Common myeloid progenitor, CD34-positive (primary cell): ENCODE measurements at regions of chr7 and their contacts with region 1.

Region 1: GRCh38 chr7:128946923-128947830 is 9.4 kb downstream of the IRF5 start:
- DNase-seq: peak in 2 of 3 donors; percentile 33 to 34
- H3K4me3 ChIP-seq: no peak overlapping the region
- H3K27ac ChIP-seq: no peak overlapping the region
- H3K4me1 ChIP-seq: peaks cover 11 to 62% (median 32%) of the 10 kb centered on the region in 4 experiments
- H3K27me3 ChIP-seq: no peaks in the 10 kb centered on the region

Region 2: GRCh38 chr7:128904381-128905197 is 42.6 kb before region 1 on chr7:
- CTCF ChIA-PET with region 1: interaction called, 21 read pairs
- POLR2A ChIA-PET with region 1: no interaction called
- DNase-seq: peak; percentile 71 to 88 (median 83)
- H3K4me3 ChIP-seq: no peak overlapping the region
- H3K27ac ChIP-seq: no peak overlapping the region
- H3K4me1 ChIP-seq: peaks cover 0 to 2% (median under 1%) of the 10 kb centered on the region in 4 experiments
- H3K27me3 ChIP-seq: peaks cover 0 to 15% (median 10%) of the 10 kb centered on the region in 5 experiments

Region 3: DNA sequence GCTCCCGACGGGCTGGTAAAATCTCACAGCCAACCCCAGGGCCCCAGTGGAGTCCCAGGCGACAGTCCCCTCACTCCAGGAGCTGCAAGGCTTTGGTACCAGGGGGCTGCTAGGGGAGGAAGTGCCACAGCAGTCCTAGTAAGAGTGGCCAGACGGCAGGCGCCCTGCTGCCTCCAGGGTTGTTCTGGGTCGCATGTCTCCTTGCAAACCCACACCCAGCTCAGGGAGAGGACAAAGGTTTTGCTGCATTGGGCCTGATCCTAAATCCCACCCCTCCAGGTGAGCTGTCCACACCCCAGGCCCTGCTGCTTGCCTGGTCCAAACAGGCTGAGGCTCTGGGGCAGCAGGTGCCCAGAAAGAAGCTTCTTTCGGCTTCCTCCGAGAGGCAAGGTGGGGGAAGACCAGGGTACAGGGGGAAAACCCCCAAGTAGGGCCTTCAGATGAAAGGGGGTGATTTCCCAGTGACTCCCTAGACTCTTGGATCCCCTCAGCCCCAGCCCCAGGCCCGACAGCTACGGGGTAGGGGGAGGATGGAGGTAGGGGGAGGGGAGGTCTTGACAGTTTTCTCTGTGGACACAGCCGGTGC is 32.5 kb before region 1 on chr7:
- CTCF ChIA-PET with region 1: interaction called, 12 read pairs
- POLR2A ChIA-PET with region 1: no interaction called
- DNase-seq: peak in 2 of 3 donors; percentile 45 to 52
- H3K4me3 ChIP-seq: no peak overlapping the region
- H3K27ac ChIP-seq: no peak overlapping the region
- H3K4me1 ChIP-seq: peaks cover 0 to 21% (median 14%) of the 10 kb centered on the region in 4 experiments
- H3K27me3 ChIP-seq: peaks cover 0 to 57% (median 11%) of the 10 kb centered on the region in 5 experiments

Region 4: GRCh38 chr7:128933180-128933891 is 13.8 kb before region 1 on chr7:
- CTCF ChIA-PET with region 1: interaction called, 23 read pairs
- POLR2A ChIA-PET with region 1: no interaction called
- DNase-seq: peak; percentile 45 to 64 (median 62)
- H3K4me3 ChIP-seq: peak overlapping the region in 3 of 7 experiments; percentile 17 to 40 (median 39)
- H3K27ac ChIP-seq: no peak overlapping the region
- H3K4me1 ChIP-seq: peaks cover 0 to 52% (median 46%) of the 10 kb centered on the region in 4 experiments
- H3K27me3 ChIP-seq: no peaks in the 10 kb centered on the region

Region 5: GRCh38 chr7:128959296-128959695 is 12.1 kb after region 1 on chr7:
- CTCF ChIA-PET with region 1: interaction called, 13 read pairs
- POLR2A ChIA-PET with region 1: no interaction called
- DNase-seq: no peak
- H3K4me3 ChIP-seq: no peak overlapping the region
- H3K27ac ChIP-seq: no peak overlapping the region
- H3K4me1 ChIP-seq: peaks cover 0 to 2% (median 0%) of the 10 kb centered on the region in 4 experiments
- H3K27me3 ChIP-seq: no peaks in the 10 kb centered on the region